CD14-positive monocyte (primary cell): ENCODE measurements at regions of chr12 and their contacts with region 1.

Region 1: GRCh38 chr12:110606253-110606611 is 7.7 kb upstream of the TCTN1 start:
- DNase-seq: no peak
- H3K4me3 ChIP-seq: peak overlapping the region; percentile 31 to 73 (median 70)
- H3K4me3 Mint-ChIP-seq: peak overlapping the region; percentile 79 to 92
- H3K27ac ChIP-seq: peak overlapping the region; percentile 86 to 88
- H3K27ac Mint-ChIP-seq: peak overlapping the region; percentile 95 to 98 (median 97)
- H3K4me1 ChIP-seq: peaks cover 17 to 44% of the 10 kb centered on the region in 2 donors
- H3K4me1 Mint-ChIP-seq: peaks cover 28% of the 10 kb centered on the region
- H3K27me3 ChIP-seq: no peaks in the 10 kb centered on the region
- H3K27me3 Mint-ChIP-seq: peaks cover 0 to 2% (median 0%) of the 10 kb centered on the region in 3 donors
- CTCF ChIP-seq: no peak

Region 2: DNA sequence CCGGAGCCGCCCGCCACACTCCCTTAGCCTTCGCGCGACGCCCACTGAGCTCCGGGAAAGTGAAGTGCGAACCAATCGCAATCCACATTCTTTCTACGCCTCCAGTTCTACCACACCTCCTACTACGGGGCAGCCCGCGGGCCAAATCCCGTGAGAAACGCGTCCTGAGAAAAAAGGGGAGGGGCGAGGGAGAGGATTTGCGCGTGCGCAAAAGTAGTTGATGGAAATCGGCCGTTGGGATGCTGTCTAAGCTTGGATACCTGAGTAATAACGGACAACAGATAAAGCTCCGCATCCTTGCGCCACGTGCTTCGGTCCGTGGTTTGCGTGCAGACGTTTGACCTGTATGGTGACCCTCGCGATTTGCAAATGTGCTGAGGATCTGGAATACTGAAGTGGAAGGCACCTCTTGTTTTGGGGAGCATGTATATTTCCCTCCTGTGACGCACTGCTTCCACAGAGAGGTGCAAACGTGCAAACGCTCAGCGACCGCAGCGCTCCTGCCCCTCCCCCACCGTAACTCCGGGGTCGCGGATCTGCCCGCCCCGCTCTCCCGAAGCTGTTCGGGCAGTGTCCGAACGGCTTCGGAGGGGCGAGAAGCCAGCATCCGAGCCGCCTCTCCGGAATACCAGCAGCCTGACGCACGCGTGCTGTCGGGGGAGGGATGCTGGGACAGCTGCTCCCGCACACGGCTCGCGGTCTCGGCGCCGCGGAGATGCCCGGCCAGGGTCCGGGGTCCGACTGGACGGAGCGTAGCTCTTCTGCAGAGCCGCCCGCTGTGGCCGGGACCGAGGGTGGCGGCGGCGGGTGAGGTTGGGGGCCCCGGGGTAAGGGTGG is 137.8 kb before region 1 on chr12 and contains the starts of genes FAM216A and GPN3:
- intact Hi-C with region 1: loop called in 1 of 2 experiments (anchors 5 kb)
- DNase-seq: peak; percentile 94 to 96 (median 94)
- H3K4me3 ChIP-seq: peak within 1 kb of the TSS; percentile 62 to 96 (median 76)
- H3K4me3 Mint-ChIP-seq: peak within 1 kb of the TSS; percentile 100
- H3K27ac ChIP-seq: peak within 1 kb of the TSS; percentile 60 to 79
- H3K27ac Mint-ChIP-seq: peak within 1 kb of the TSS; percentile 90 to 98 (median 95)
- H3K4me1 ChIP-seq: peaks cover 23 to 34% of the 10 kb centered on the region in 2 donors
- H3K4me1 Mint-ChIP-seq: peaks cover 25% of the 10 kb centered on the region
- H3K27me3 ChIP-seq: no peaks in the 10 kb centered on the region
- H3K27me3 Mint-ChIP-seq: no peaks in the 10 kb centered on the region
- CTCF ChIP-seq: no peak
- polyA plus RNA-seq, gene FAM216A: 5.1 to 10.9 (median 6.2) TPM
- polyA plus RNA-seq, gene GPN3: 7.3 to 52.4 (median 25.3) TPM

Region 3: DNA sequence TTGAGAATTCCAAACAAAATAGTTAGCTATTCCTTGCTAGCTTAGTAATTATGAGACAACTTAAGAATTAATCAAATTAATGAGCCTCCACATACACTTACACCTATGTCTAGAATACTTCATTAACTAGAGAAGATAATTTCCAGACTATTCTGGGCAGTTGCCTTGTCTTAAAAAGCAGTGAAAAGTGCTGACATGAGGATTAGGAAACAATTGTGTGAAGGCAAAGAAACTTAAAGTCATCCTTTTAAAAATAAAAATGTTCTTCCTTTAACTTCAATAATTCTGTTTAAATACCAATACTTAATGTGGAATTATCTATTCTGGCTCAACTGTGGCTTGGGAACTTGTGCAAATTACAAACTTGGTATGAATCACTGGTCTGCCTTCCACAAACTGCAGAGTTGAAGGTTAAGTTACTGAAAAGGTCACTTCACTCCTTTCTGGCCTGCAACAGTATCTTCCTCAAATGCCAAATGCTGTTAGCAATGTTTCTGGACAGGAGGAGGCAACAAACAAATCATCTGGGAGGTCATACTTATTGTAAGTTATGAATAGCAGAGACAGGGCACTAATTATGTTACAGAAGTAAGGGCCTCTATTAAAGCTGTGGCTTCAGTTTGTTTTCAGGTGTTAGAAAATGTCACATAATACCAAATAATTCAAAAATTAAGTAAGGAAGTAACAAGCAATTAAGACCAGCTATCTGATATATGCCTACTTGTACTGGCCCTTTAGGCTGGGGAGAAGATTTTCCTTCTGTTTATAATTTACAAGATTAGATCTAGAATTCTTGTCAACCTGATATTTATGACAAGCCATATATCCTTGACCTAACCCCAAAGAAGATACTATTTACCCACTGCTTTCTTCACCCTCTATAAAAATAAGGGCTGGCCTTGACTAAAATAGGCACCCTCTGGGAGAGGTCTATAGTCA is 42.3 kb before region 1 on chr12:
- intact Hi-C with region 1: no loop called
- DNase-seq: peak; percentile 43 to 80 (median 70)
- H3K4me3 ChIP-seq: peak overlapping the region in 1 of 3 experiments; percentile 43
- H3K4me3 Mint-ChIP-seq: peak overlapping the region in 1 of 2 donors; percentile 15
- H3K27ac ChIP-seq: peak overlapping the region; percentile 85 to 87
- H3K27ac Mint-ChIP-seq: peak overlapping the region; percentile 90 to 96 (median 94)
- H3K4me1 ChIP-seq: peaks cover 45 to 53% of the 10 kb centered on the region in 2 donors
- H3K4me1 Mint-ChIP-seq: peaks cover 68% of the 10 kb centered on the region
- H3K27me3 ChIP-seq: no peaks in the 10 kb centered on the region
- H3K27me3 Mint-ChIP-seq: no peaks in the 10 kb centered on the region
- CTCF ChIP-seq: no peak

Region 4: GRCh38 chr12:110647631-110648040 is 41.4 kb after region 1 on chr12:
- intact Hi-C with region 1: loop called in 1 of 2 experiments (anchors 5 kb)
- DNase-seq: peak in 1 of 3 donors; percentile 32
- H3K4me3 ChIP-seq: no peak overlapping the region
- H3K4me3 Mint-ChIP-seq: no peak overlapping the region
- H3K27ac ChIP-seq: peak overlapping the region in 1 of 2 donors; percentile 17
- H3K27ac Mint-ChIP-seq: peak overlapping the region in 5 of 7 donors; percentile 8 to 75 (median 45)
- H3K4me1 ChIP-seq: peaks cover 4 to 15% of the 10 kb centered on the region in 2 donors
- H3K4me1 Mint-ChIP-seq: peaks cover 33% of the 10 kb centered on the region
- H3K27me3 ChIP-seq: no peaks in the 10 kb centered on the region
- H3K27me3 Mint-ChIP-seq: peaks cover 0 to 1% (median 0%) of the 10 kb centered on the region in 3 donors
- CTCF ChIP-seq: no peak

Region 5: DNA sequence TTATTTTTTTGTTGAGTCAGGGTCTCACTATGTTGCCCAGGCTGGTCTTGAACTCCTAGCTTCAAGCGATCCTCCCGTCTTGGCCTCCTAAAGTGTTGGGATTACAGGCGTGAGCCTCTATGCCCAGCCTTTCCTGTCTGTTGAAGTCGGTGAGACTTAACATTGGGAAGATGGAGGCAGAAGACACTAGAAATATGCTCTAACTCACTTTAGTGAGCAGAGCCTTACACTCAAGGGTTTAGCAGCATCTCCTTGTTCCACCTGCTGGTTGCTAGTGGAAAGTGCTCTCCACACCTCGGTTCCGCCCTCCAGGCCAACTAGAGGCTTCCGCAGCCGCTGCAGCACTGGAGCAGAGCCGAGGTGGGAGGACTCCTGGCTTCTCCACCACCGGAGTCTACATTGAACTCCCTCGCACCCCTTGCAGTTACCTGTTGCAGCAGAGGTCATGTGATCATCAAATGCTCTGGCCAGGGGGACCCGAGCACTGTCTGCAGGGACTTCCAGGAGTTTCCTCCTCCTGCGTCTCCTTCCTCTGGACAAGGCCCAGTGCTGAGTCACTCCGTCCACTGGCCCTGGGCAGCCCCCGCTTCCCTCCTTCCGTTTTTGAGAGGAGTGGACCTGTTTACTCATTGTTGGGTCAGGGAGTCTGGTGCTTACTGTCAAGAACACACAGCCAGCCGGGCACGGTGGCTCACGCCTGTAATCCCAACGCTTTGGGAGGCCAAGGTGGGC is 92.1 kb after region 1 on chr12:
- intact Hi-C with region 1: loop called in 1 of 2 experiments (anchors 5 kb)
- DNase-seq: peak; percentile 85 to 96 (median 91)
- H3K4me3 ChIP-seq: peak overlapping the region; percentile 10 to 72 (median 23)
- H3K4me3 Mint-ChIP-seq: peak overlapping the region; percentile 76 to 87
- H3K27ac ChIP-seq: peak overlapping the region; percentile 62 to 90
- H3K27ac Mint-ChIP-seq: peak overlapping the region; percentile 88 to 95 (median 93)
- H3K4me1 ChIP-seq: peaks cover 62 to 63% of the 10 kb centered on the region in 2 donors
- H3K4me1 Mint-ChIP-seq: peaks cover 63% of the 10 kb centered on the region
- H3K27me3 ChIP-seq: no peaks in the 10 kb centered on the region
- H3K27me3 Mint-ChIP-seq: peaks cover 0 to 3% (median 2%) of the 10 kb centered on the region in 3 donors
- CTCF ChIP-seq: peak; percentile 87

Region 6: DNA sequence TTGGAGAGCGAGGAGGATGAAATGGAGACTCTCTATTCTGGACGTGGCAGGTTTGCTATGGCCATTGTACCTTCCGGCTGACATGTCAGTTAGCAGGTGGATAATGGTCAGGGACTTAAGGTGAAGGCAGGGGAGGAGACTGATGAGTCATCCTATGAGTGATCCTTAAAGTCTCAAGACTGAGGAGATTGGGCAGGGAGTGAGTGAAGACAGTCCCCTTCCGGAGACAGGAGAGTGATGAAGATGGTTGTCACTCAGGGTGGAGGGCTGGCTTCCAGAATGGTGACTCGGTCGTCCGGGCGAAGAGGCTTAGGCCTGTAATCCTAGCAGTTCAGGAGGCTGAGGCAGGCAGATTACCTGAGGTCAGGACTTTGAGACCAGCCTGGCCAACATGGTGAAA is 190.7 kb after region 1 on chr12:
- intact Hi-C with region 1: no loop called
- DNase-seq: no peak
- H3K4me3 ChIP-seq: no peak overlapping the region
- H3K4me3 Mint-ChIP-seq: no peak overlapping the region
- H3K27ac ChIP-seq: no peak overlapping the region
- H3K27ac Mint-ChIP-seq: no peak overlapping the region
- H3K4me1 ChIP-seq: no peaks in the 10 kb centered on the region
- H3K4me1 Mint-ChIP-seq: peaks cover 2% of the 10 kb centered on the region
- H3K27me3 ChIP-seq: no peaks in the 10 kb centered on the region
- H3K27me3 Mint-ChIP-seq: peaks cover 0 to 2% (median 0%) of the 10 kb centered on the region in 3 donors
- CTCF ChIP-seq: no peak

Region 7: DNA sequence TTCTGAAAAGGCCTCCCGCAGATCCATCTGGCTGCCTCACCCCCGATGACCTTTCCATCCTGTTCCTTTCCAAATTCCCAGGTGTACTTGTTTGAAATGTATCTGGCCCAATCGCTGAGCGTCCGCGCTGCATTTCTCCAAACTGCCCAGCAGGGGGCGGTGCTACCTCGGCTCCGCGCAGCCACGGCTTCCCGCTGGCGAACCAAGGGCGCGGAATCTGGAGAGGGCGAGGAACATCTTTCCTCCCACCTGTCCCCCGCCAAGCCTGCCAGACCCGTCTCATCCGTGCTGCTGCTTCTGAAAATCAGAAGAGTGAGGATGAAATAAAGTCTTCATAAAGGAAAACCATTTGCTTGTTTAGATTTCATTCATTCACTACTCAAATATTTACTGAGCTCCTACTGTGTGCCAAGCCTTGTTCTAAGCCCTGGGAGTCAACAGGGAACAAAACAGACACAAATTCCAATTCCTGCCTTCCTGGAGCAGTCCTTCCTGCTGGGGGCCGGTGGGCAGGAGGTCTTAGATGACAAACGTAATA is 330.9 kb after region 1 on chr12:
- intact Hi-C with region 1: no loop called
- DNase-seq: peak; percentile 32 to 52 (median 47)
- H3K4me3 ChIP-seq: no peak overlapping the region
- H3K4me3 Mint-ChIP-seq: peak overlapping the region in 1 of 2 donors; percentile 26
- H3K27ac ChIP-seq: no peak overlapping the region
- H3K27ac Mint-ChIP-seq: no peak overlapping the region
- H3K4me1 ChIP-seq: peaks cover 6 to 7% of the 10 kb centered on the region in 2 donors
- H3K4me1 Mint-ChIP-seq: peaks cover 13% of the 10 kb centered on the region
- H3K27me3 ChIP-seq: no peaks in the 10 kb centered on the region
- H3K27me3 Mint-ChIP-seq: peaks cover 7 to 17% (median 11%) of the 10 kb centered on the region in 3 donors
- CTCF ChIP-seq: peak; percentile 99